CD14-positive monocyte (primary cell): ENCODE measurements at regions of chr4 and their contacts with region 1.

Region 1: GRCh38 chr4:6909073-6909965 is at the start of gene TBC1D14:
- DNase-seq: peak; percentile 72 to 78 (median 78)
- H3K4me3 ChIP-seq: peak within 1 kb of the TSS; percentile 77 to 94 (median 78)
- H3K4me3 Mint-ChIP-seq: peak within 1 kb of the TSS; percentile 96 to 97
- H3K27ac ChIP-seq: peak within 1 kb of the TSS; percentile 87 to 90
- H3K27ac Mint-ChIP-seq: peak within 1 kb of the TSS; percentile 86 to 96 (median 92)
- H3K4me1 ChIP-seq: peaks cover 49 to 53% of the 10 kb centered on the region in 2 donors
- H3K4me1 Mint-ChIP-seq: peaks cover 61% of the 10 kb centered on the region
- H3K27me3 ChIP-seq: no peaks in the 10 kb centered on the region
- H3K27me3 Mint-ChIP-seq: peaks cover 8 to 12% (median 11%) of the 10 kb centered on the region in 3 donors
- CTCF ChIP-seq: no peak
- polyA plus RNA-seq, gene TBC1D14: 36.3 to 44.7 (median 39.3) TPM

Region 2: DNA sequence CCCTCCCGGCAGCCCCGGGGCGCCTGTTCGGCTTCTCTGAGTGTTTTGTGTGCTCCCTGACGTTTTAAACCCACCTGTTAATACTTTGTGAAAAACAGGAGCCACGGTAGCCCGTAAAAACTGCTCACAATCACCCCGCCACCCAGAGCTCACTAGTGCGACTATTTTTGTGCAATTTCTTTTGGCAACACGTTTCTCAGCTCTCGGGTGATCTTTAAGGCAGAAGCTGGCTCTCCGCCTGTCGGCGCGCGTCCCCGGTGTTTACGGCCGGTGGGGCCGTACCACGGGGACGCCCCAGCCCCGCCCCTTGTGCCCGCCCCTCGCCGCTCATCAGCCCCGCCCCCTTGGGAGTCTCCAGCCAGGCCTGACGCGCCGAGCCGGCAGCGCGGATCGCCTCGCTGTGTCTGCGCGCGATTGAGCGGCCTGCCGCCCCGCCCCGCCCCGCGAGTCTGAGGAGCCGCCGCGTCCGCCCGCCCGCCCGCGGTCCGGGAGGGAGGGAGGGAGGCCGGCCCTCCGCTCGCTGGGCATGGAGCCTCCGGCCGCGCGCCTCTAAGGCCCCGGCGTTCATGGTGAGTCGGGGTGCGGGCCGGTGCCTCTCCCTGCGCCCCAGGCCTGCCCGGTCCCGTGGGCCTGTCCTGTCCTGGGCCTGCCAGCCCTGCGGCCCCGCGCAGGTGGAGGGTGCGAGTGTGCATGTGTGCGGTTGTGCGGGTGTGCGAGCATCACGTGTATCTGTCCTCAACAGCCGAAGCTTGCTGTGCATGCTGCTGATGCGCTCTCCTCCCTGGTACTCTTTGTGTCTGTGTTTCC is 77.7 kb after region 1 on chr4:
- intact Hi-C with region 1: loop called (anchors 2 kb)
- DNase-seq: peak; percentile 90 to 91 (median 90)
- H3K4me3 ChIP-seq: peak overlapping the region; percentile 57 to 80 (median 69)
- H3K4me3 Mint-ChIP-seq: peak overlapping the region; percentile 92 to 94
- H3K27ac ChIP-seq: peak overlapping the region; percentile 79 to 81
- H3K27ac Mint-ChIP-seq: peak overlapping the region; percentile 91 to 98 (median 97)
- H3K4me1 ChIP-seq: peaks cover 71 to 80% of the 10 kb centered on the region in 2 donors
- H3K4me1 Mint-ChIP-seq: peaks cover 81% of the 10 kb centered on the region
- H3K27me3 ChIP-seq: no peaks in the 10 kb centered on the region
- H3K27me3 Mint-ChIP-seq: peaks cover 0 to 3% (median 2%) of the 10 kb centered on the region in 3 donors
- CTCF ChIP-seq: no peak